ENCODE measurements at regions of chr5 and their contacts with region 1.

Region 1: DNA sequence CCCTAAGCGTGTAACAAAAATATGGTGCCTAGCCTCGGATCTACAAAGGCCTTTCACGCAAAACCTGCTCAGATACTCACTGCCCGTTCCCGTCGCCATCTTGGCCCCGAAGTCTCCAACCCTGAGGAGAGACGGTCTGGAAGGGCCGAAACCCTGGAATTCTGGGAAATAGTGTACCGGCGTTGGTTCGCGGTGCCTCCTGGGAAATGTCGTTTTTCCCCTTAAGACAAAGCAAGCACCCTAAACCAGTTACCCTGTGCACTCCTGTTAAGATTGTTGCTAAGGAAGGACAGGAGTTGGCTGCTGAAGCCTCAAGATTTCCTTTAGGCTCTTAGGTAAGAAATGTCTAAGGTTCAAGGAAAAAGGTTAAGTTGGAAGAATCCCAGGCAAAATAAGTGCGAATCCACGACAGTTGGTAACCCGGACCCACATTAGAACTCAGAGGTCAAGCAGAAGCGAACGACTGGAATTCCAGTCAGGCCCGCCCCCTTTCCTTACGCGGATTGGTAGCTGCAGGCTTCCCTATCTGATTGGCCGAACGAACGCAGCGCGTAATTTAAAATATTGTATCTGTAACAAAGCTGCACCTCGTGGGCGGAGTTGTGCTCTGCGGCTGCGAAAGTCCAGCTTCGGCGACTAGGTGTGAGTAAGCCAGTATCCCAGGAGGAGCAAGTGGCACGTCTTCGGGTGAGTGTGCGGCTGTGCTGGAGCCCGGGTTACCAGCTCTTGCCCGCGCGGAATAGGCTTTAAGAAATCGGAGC is at the starts of genes BRD8 and KIF20A:
- DNase-seq: peak; percentile 89
- H3K4me3 Mint-ChIP-seq: no peak within 1 kb of the TSS
- H3K27ac Mint-ChIP-seq: peak within 1 kb of the TSS; percentile 17
- H3K4me1 Mint-ChIP-seq: peaks cover 14% of the 10 kb centered on the region
- H3K27me3 Mint-ChIP-seq: no peaks in the 10 kb centered on the region
- total RNA-seq, gene BRD8: 45.4 and 48.4 TPM in 2 replicates
- total RNA-seq, gene KIF20A: 28.1 and 30.3 TPM in 2 replicates

Region 2: GRCh38 chr5:137754126-137754960 is 424.4 kb before region 1 on chr5 and contains the start of gene HNRNPA0:
- intact Hi-C with region 1: loop called (anchors 1 kb)
- DNase-seq: peak; percentile 96
- H3K4me3 Mint-ChIP-seq: peak within 1 kb of the TSS; percentile 99
- H3K27ac Mint-ChIP-seq: peak within 1 kb of the TSS; percentile 100
- H3K4me1 Mint-ChIP-seq: peaks cover 21% of the 10 kb centered on the region
- H3K27me3 Mint-ChIP-seq: no peaks in the 10 kb centered on the region
- total RNA-seq, gene HNRNPA0: 37.2 and 37.5 TPM in 2 replicates

Region 3: DNA sequence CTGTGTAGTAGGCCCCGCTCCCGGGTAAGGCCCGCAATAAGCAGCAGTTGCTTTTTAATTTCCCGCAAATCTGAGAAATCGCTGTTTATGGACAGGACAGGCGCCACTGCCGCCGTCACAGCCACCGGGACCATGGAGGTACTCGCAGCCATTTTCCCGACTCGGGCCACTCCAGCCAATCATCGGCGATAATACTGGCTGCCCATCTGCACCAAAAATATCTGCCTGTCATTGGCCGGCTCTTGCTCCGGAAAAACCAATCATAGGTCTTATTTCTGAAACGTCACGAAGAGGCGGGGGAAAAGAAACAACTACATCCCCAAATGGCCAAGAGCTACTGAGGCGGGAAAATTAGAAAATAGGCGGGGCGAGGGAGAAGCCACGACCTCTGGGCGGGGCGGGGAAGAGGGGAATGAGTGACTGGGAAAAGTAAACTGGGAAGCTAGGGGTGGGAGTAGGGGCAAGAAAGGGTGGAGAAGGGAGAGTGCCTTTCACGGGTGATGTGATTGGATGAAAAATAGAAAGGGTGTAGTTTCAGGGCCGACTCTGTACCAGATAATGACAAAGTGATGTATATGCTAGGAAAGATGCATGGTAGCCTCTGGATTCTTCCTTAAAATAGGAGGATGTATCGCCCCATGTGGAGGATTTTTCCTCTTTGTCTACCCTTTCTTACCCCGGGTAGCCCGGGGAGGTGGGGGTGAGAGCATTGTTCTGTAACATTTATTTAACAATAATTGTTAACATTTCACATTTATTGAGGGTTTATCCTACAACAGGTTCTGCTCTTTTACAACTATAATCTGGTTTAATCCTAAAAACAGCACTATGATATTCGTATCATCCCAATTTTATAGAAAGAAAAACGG is 34.7 kb after region 1 on chr5 and contains the start of gene CDC23:
- intact Hi-C with region 1: loop called (anchors 1 kb)
- DNase-seq: peak; percentile 90
- H3K4me3 Mint-ChIP-seq: peak within 1 kb of the TSS; percentile 97
- H3K27ac Mint-ChIP-seq: peak within 1 kb of the TSS; percentile 94
- H3K4me1 Mint-ChIP-seq: peaks cover 11% of the 10 kb centered on the region
- H3K27me3 Mint-ChIP-seq: no peaks in the 10 kb centered on the region
- total RNA-seq, gene CDC23: 41.5 and 45.8 TPM in 2 replicates

Region 4: DNA sequence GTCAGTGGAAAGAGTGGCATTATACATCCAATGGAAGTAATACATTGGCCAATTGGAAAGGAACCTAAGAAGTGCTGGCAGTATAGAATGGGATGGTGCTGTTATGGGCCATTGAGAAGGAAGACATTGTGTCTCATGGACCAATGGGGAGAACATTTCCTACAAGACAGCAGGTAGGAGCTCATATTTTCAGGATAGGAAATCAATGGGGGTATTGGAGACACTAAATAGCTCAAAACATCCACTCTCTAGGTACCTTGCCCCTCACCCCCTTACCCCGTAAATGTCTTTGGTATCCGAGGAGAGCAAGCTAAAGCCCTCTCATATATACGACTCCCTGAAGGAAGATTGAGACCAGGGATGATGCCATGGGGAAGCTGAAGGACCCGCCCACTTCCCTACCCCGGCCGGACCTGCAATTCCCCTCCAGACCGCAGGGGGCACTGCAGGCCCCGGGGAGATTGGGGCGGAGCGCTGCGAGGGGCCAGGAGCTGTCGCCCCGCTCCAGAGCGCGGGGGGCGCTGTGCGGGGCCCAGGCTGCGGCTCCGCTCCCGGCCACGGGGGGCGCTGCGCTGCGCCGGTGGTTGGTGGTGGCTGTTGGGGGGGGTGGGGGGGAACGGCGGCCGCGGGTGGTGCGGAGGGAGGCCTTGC is 173.5 kb after region 1 on chr5 and contains the start of gene KDM3B:
- intact Hi-C with region 1: loop called (anchors 1 kb)
- DNase-seq: peak; percentile 93
- H3K4me3 Mint-ChIP-seq: peak within 1 kb of the TSS; percentile 97
- H3K27ac Mint-ChIP-seq: peak within 1 kb of the TSS; percentile 94
- H3K4me1 Mint-ChIP-seq: peaks cover 37% of the 10 kb centered on the region
- H3K27me3 Mint-ChIP-seq: no peaks in the 10 kb centered on the region
- total RNA-seq, gene KDM3B: 52.8 and 54.5 TPM in 2 replicates

Region 5: GRCh38 chr5:138491669-138492559 is 313.2 kb after region 1 on chr5:
- intact Hi-C with region 1: loop called (anchors 10 kb)
- DNase-seq: peak; percentile 81
- H3K4me3 Mint-ChIP-seq: peak overlapping the region; percentile 91
- H3K27ac Mint-ChIP-seq: no peak overlapping the region
- H3K4me1 Mint-ChIP-seq: peaks cover 14% of the 10 kb centered on the region
- H3K27me3 Mint-ChIP-seq: peaks cover 21% of the 10 kb centered on the region

Region 6: DNA sequence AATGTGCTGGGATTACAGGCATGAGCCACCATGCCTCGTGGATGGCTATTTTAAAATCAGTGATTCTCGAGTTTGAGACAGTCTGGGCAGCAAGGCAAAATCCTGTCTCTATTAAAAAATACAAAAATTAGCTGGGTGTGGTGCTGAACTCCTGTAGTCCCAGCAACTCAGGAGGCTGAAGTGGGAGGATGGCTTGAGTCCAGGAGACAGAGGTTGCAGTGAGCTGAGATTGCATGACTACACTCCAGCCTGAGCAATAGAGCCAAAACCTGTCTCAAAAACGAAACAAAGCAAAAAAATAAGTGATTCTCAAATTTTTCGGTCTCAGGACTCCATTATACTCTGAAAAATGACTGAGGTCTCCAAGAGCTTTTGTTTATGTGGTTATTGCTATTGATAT is 444.4 kb after region 1 on chr5:
- intact Hi-C with region 1: no loop called
- DNase-seq: no peak
- H3K4me3 Mint-ChIP-seq: no peak overlapping the region
- H3K27ac Mint-ChIP-seq: no peak overlapping the region
- H3K4me1 Mint-ChIP-seq: no peaks in the 10 kb centered on the region
- H3K27me3 Mint-ChIP-seq: peaks cover 29% of the 10 kb centered on the region

Measured in activated T-helper 2 cell treated with anti-CD3 and anti-CD28 coated beads, Interferon-gamma antibody, Interleukin-2, Interleukin-4, amounts not matched to agents 10 μg/mL and 5 μg/mL and 100 μg/mL, durations not matched to agents 14 hours and 24 hours and 36 hours (primary cell).